ENCODE measurements at regions of chr11 and their contacts with region 1.

Region 1: GRCh38 chr11:108647701-108648527 is 17.0 kb upstream of the DDX10 start:
- DNase-seq: peak; percentile 72
- ATAC-seq: peak; percentile 94

Region 2: DNA sequence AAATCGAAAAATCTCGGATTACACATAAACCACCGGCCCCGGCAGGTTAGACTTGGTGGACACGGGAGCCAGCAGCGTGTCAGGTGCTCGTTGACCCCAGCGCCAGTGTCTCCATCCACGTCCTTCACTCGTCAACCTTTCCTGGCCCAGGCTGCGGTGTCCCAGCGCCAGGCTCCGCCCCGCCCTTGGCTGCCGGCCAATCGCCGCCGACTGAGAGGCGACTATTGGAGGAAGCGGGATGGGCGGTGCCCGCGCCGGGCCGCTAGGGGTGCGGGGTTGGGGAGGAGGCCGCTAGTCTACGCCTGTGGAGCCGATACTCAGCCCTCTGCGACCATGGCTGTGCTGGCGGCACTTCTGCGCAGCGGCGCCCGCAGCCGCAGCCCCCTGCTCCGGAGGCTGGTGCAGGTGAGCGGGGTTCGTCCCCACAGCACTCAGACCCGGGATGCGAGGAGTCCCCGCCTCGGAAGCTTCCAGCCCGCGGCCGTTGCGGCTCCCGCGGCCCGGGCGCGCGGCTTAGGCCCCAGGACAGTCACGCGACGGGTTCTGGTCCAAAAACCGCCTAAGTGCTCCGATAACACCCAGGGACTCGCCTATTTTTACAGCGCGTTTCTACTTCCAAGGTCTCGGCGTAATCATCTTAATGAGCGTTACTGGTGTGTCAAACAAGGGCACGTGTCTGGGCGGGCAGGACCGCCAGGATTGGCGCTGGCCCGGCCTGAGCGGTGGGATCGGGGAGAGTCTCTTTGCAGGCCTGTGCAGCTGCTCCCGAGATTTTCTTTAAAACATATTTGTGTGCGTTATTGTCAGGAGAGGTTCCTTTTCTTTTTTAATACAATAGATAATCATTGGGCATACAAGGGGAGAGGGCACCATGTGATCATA is 526.4 kb before region 1 on chr11 and contains the start of gene ACAT1:
- intact Hi-C with region 1: loop called (anchors 10 kb)
- DNase-seq: peak; percentile 99
- ATAC-seq: peak; percentile 98
- total RNA-seq, gene ACAT1: 72.5 TPM

Measured in sciatic nerve (tissue), 2 donors.